CD4-positive, alpha-beta T cell (primary cell): ENCODE measurements at regions of chr20 and their contacts with region 1.

Region 1: DNA sequence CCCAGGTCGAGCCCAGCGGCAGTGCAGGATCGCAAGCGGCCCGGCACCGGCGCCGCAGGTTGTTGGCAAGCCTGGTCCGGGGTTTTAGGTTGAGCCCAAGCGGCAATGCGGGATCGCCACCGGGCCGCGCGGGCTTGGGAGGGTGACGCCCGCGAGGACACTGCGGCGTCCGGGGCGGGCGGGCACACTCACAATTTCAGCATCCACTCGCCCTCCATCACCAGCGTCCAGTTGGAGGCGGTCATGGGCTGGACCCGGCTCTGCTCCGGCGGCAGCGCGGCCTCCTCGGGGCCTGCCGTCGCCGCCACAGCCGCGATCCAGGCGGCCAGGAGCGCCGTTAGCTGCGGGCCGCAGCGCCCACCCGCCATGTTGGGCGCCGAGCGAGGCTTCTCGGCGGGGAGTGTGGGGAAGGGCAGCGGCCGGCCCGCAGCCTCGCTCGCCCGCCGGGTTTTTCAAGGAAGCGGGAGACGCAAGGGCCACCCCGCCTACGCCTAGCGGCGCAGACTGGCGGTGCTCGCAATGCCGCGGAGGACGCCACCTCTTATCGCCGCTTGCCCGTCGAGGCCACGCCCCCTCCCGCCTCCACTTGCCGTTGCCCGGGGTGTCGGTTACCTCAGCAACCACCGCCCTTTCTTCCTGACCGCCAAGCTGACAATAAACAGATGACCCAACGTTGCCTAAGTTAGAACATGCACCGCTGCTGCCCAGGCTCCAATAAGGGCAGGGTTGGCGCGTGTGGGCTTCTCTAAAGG is at the start of gene TMX4:
- DNase-seq: peak; percentile 72 to 95 (median 84)
- ATAC-seq: peak; percentile 71
- H3K4me3 ChIP-seq: peak within 1 kb of the TSS; percentile 65
- H3K4me3 Mint-ChIP-seq: peak within 1 kb of the TSS; percentile 93
- H3K27ac ChIP-seq: peak within 1 kb of the TSS; percentile 57 to 85
- H3K27ac Mint-ChIP-seq: peak within 1 kb of the TSS; percentile 85
- H3K4me1 ChIP-seq: peaks cover 18% of the 10 kb centered on the region
- H3K4me1 Mint-ChIP-seq: peaks cover 38% of the 10 kb centered on the region
- H3K27me3 ChIP-seq: no peaks in the 10 kb centered on the region
- H3K27me3 Mint-ChIP-seq: no peaks in the 10 kb centered on the region
- CTCF ChIP-seq: peak; percentile 13
- total RNA-seq, gene TMX4: 39.8 to 47.9 TPM

Region 2: GRCh38 chr20:8033151-8033841 is 13.9 kb after region 1 on chr20:
- CTCF ChIA-PET with region 1: interaction called, 3 read pairs
- POLR2A ChIA-PET with region 1: interaction called, 10 read pairs
- intact Hi-C with region 1: no loop called
- DNase-seq: no peak
- ATAC-seq: no peak
- H3K4me3 ChIP-seq: no peak overlapping the region
- H3K4me3 Mint-ChIP-seq: no peak overlapping the region
- H3K27ac ChIP-seq: no peak overlapping the region
- H3K27ac Mint-ChIP-seq: no peak overlapping the region
- H3K4me1 ChIP-seq: no peaks in the 10 kb centered on the region
- H3K4me1 Mint-ChIP-seq: no peaks in the 10 kb centered on the region
- H3K27me3 ChIP-seq: no peaks in the 10 kb centered on the region
- H3K27me3 Mint-ChIP-seq: no peaks in the 10 kb centered on the region
- CTCF ChIP-seq: no peak

Region 3: DNA sequence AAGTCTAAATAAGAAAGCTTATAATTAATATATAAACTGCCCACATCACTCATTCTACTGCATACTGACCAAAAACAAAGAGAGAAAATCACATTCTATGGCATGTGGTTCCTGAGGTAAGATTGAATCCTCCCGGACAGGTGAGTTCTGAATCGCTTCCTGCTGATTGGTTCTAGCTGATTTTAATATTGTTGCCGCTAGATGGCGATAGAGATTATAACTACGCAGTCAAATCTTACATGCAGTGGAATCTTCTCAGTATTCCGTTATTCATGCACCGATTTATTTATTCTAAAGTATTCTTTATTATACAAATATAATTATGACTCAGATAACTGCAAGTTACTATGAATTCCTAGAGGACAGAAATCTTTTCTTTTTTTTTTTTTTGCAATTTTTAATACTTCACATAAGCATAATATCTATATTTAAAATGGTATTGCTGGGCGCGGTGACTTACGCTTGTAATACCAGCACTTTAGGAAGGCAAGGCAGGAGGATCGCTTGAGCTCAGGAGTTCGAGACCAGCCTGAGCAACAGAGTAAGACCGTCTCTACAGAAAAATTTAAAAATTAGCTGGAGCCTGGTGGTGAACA is 24.4 kb after region 1 on chr20:
- CTCF ChIA-PET with region 1: interaction called, 19 read pairs
- POLR2A ChIA-PET with region 1: interaction called, 7 read pairs
- intact Hi-C with region 1: no loop called
- DNase-seq: peak in 4 of 14 experiments; percentile 39 to 82 (median 79)
- ATAC-seq: peak; percentile 85
- H3K4me3 ChIP-seq: no peak overlapping the region
- H3K4me3 Mint-ChIP-seq: no peak overlapping the region
- H3K27ac ChIP-seq: no peak overlapping the region
- H3K27ac Mint-ChIP-seq: no peak overlapping the region
- H3K4me1 ChIP-seq: no peaks in the 10 kb centered on the region
- H3K4me1 Mint-ChIP-seq: peaks cover 4% of the 10 kb centered on the region
- H3K27me3 ChIP-seq: peaks cover 0 to 7% of the 10 kb centered on the region in 2 experiments
- H3K27me3 Mint-ChIP-seq: peaks cover 9% of the 10 kb centered on the region
- CTCF ChIP-seq: peak; percentile 84

Region 4: GRCh38 chr20:8073116-8073832 is 53.9 kb after region 1 on chr20:
- CTCF ChIA-PET with region 1: no interaction called
- POLR2A ChIA-PET with region 1: no interaction called
- intact Hi-C with region 1: loop called in 1 of 2 experiments (anchors 10 kb)
- DNase-seq: peak in 4 of 14 experiments; percentile 13 to 55 (median 41)
- ATAC-seq: peak; percentile 85
- H3K4me3 ChIP-seq: no peak overlapping the region
- H3K4me3 Mint-ChIP-seq: no peak overlapping the region
- H3K27ac ChIP-seq: peak overlapping the region; percentile 3 to 40
- H3K27ac Mint-ChIP-seq: peak overlapping the region; percentile 81
- H3K4me1 ChIP-seq: peaks cover 4% of the 10 kb centered on the region
- H3K4me1 Mint-ChIP-seq: peaks cover 19% of the 10 kb centered on the region
- H3K27me3 ChIP-seq: no peaks in the 10 kb centered on the region
- H3K27me3 Mint-ChIP-seq: no peaks in the 10 kb centered on the region
- CTCF ChIP-seq: no peak